ENCODE measurements at regions of chr12 and their contacts with region 1.

Region 1: GRCh38 chr12:14272956-14273907 is 92.2 kb upstream of the ATF7IP start:
- DNase-seq: peak; percentile 43 to 95 (median 88)
- H3K4me3 ChIP-seq: peak overlapping the region in 2 of 7 experiments; percentile 4 to 29
- H3K27ac ChIP-seq: no peak overlapping the region
- H3K4me1 ChIP-seq: peaks cover 5 to 15% (median 10%) of the 10 kb centered on the region in 4 experiments
- H3K27me3 ChIP-seq: no peaks in the 10 kb centered on the region

Region 2: DNA sequence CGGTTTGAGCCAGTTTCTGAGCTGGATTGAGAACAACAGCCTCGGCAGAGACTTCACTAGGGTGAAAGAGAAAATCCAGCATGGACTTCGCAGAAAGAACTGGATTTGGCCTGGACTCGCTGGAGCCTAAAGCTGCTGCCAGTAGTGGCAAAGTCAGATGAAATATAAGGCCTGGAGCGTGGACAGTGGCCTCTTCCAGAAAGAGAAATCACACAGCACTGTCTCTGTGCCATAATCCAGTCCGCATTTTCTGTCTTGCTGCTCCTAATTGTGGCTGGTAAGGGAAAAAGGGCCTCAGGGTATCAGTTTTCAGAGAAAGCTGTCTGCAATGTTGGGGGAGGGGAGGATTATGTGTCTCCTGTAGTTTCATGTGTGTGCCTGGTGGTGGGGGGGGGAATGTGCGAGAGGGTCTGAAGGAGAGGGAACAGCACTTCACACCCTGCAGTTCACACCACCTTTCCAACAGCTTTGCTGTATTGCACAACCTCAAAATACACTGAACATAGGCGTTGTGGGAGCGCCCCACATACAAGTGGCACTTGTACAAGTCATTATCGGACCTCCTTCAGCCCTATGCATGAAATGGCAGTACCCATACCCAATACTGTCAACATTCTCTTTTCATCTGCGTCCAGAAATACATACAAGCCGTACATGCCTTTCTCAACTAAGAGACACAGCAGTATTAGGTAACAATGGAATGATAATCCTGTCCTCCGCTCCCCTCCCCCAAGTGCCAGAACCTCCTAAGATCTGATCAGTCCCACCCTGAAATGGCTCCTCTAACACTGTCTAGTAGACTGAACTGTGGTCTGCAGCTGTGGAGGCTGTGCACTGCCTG is 15.3 kb before region 1 on chr12:
- CTCF ChIA-PET with region 1: interaction called, 11 read pairs
- POLR2A ChIA-PET with region 1: interaction called, 7 read pairs
- DNase-seq: peak; percentile 93 to 98 (median 96)
- H3K4me3 ChIP-seq: peak overlapping the region in 3 of 7 experiments; percentile 32 to 67 (median 43)
- H3K27ac ChIP-seq: peak overlapping the region; percentile 66 to 88
- H3K4me1 ChIP-seq: peaks cover 24 to 52% (median 36%) of the 10 kb centered on the region in 4 experiments
- H3K27me3 ChIP-seq: no peaks in the 10 kb centered on the region